K562 (cell line): ENCODE measurements at regions of chr6 and their contacts with region 1.

Region 1: GRCh38 chr6:119037941-119038623 is 40.4 kb downstream of the FAM184A start:
- DNase-seq: peak; percentile 60 to 80 (median 68)
- ATAC-seq: peak; percentile 84
- H3K4me3 ChIP-seq: no peak overlapping the region
- H3K27ac ChIP-seq: peak overlapping the region; percentile 68
- H3K4me1 ChIP-seq: peaks cover 0 to 20% of the 10 kb centered on the region in 2 experiments; a peak in 2 of 5 replicates
- H3K27me3 ChIP-seq: no peaks in the 10 kb centered on the region
- CTCF ChIP-seq: no peak
- EP300 ChIP-seq: peak; percentile 89
- POLR2A ChIP-seq: no peak
- RAD21 ChIP-seq: no peak

Region 2: DNA sequence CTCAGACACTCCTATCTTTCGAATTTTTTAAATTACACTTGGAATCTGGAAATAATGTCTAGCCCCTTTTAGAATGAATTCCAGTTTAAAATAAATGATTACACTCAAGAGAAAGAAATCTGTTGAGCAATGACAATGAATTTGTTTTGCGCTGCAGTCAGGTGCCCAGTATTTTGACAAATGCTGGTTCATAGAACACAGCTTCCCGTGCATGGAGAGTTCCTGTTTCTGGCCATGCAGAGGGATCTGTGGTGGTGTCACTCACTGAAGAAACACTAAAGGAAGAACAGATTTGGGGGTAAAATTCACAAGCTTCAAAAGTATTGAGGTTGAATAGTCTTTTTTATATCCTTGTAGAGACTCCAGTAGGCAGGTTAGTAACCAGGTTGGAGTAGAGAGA is 273.3 kb before region 1 on chr6:
- CTCF ChIA-PET with region 1: no interaction called
- POLR2A ChIA-PET with region 1: no interaction called
- in situ Hi-C with region 1: no loop called
- intact Hi-C with region 1: no loop called
- DNase-seq: no peak
- ATAC-seq: no peak
- H3K4me3 ChIP-seq: no peak overlapping the region
- H3K27ac ChIP-seq: no peak overlapping the region
- H3K4me1 ChIP-seq: no peaks in the 10 kb centered on the region; a peak in 1 of 5 replicates
- H3K27me3 ChIP-seq: no peaks in the 10 kb centered on the region
- CTCF ChIP-seq: no peak
- EP300 ChIP-seq: no peak
- POLR2A ChIP-seq: no peak
- RAD21 ChIP-seq: no peak

Region 3: DNA sequence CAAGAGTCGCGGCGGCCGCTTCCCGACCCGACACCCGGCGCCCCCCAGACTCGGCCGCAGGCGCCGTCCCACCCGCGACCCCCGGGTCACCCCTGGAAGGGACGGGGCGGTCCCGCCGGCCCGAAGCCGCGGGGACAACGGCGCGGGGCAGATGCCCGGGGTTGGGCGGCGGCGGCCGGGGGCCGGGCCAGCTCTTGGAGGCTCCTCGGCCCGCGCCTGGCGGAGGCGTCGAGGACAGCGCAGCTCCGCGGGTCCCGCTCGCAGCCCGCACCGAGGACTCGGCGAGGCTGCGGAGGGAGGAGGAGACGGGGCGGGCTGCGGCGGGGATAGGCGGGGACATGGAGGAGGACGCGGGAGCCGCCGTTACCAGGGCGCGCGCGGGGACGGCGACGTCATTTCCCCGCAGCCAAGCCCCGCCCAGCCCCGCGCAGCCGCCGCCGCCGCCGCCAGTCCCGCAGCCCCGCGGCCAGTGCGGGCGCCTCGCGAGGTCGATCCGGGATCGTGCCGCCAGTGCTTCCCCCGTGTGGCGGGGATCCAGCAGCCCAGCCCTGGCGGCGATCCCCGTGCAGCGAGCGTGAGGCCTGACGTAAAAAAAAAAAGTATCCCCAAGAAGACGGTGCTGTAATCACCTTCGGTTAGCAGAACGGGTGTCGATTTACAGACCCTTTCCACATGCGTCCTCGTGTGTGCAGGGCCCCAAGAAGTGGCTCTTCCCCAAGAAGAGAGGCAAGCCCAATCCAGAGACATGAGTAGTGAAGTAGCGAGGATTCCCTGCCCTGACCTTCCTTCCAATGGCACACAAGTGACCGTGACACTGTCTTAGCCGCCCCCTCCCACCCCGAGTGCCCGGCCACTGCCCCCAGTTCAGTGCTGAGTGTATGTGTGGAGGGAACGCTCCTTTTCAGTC is 40.5 kb after region 1 on chr6 and contains the start of gene FAM184A:
- CTCF ChIA-PET with region 1: no interaction called
- POLR2A ChIA-PET with region 1: interaction called, 4 read pairs
- in situ Hi-C with region 1: no loop called
- intact Hi-C with region 1: loop called (anchors 2 kb)
- DNase-seq: peak; percentile 84 to 87 (median 86)
- ATAC-seq: peak; percentile 91
- H3K4me3 ChIP-seq: peak within 1 kb of the TSS; percentile 74
- H3K27ac ChIP-seq: peak within 1 kb of the TSS; percentile 79
- H3K4me1 ChIP-seq: peaks cover 13 to 15% of the 10 kb centered on the region in 2 experiments; a peak in 3 of 5 replicates
- H3K27me3 ChIP-seq: no peaks in the 10 kb centered on the region
- CTCF ChIP-seq: peak; percentile 58 to 92 (median 70)
- EP300 ChIP-seq: peak; percentile 13; the same call in 1 of the 2 replicates
- POLR2A ChIP-seq: peak; percentile 71
- RAD21 ChIP-seq: peak; percentile 35 to 53
- polyA plus RNA-seq, gene FAM184A: 6.4 to 9.3 TPM

Region 4: GRCh38 chr6:119209452-119210205 is 171.5 kb after region 1 on chr6:
- CTCF ChIA-PET with region 1: no interaction called
- POLR2A ChIA-PET with region 1: no interaction called
- in situ Hi-C with region 1: no loop called
- intact Hi-C with region 1: no loop called
- DNase-seq: no peak
- ATAC-seq: no peak
- H3K4me3 ChIP-seq: no peak overlapping the region
- H3K27ac ChIP-seq: no peak overlapping the region
- H3K4me1 ChIP-seq: no peaks in the 10 kb centered on the region
- H3K27me3 ChIP-seq: no peaks in the 10 kb centered on the region
- CTCF ChIP-seq: no peak
- EP300 ChIP-seq: no peak
- POLR2A ChIP-seq: no peak
- RAD21 ChIP-seq: no peak